Motor neuron (in vitro differentiated cells): ENCODE measurements at regions of chr2 and their contacts with region 1.

Region 1: GRCh38 chr2:179842498-179843153 is 18.8 kb downstream of the ZNF385B start:
- ATAC-seq: peak in 4 of 8 experiments; percentile 41 to 88 (median 56)
- H3K4me3 ChIP-seq: no peak overlapping the region
- H3K27ac ChIP-seq: no peak overlapping the region
- H3K4me1 ChIP-seq: no peaks in the 10 kb centered on the region

Region 2: GRCh38 chr2:180056367-180057118 is 213.9 kb after region 1 on chr2:
- in situ Hi-C with region 1: loop called in 1 of 9 experiments (anchors 25 kb)
- ATAC-seq: no peak
- H3K4me3 ChIP-seq: no peak overlapping the region
- H3K27ac ChIP-seq: no peak overlapping the region
- H3K4me1 ChIP-seq: peaks cover 0 to 11% of the 10 kb centered on the region in 2 donors

Region 3: GRCh38 chr2:180077295-180077906 is 234.8 kb after region 1 on chr2:
- in situ Hi-C with region 1: loop called in 2 of 9 experiments (anchors 25 kb)
- ATAC-seq: peak in 4 of 8 experiments; percentile 28 to 67 (median 62)
- H3K4me3 ChIP-seq: no peak overlapping the region
- H3K27ac ChIP-seq: no peak overlapping the region
- H3K4me1 ChIP-seq: no peaks in the 10 kb centered on the region